ENCODE measurements at regions of chr18 and their contacts with region 1.

Region 1: GRCh38 chr18:11943551-11943950 is 35.4 kb upstream of the MPPE1 start:
- DNase-seq: no peak
- ATAC-seq: no peak
- H3K4me3 ChIP-seq: no peak overlapping the region
- H3K27ac ChIP-seq: no peak overlapping the region
- H3K4me1 ChIP-seq: peaks cover 10 to 18% (median 15%) of the 10 kb centered on the region in 3 donors
- H3K27me3 ChIP-seq: no peaks in the 10 kb centered on the region
- CTCF ChIP-seq: no peak

Region 2: DNA sequence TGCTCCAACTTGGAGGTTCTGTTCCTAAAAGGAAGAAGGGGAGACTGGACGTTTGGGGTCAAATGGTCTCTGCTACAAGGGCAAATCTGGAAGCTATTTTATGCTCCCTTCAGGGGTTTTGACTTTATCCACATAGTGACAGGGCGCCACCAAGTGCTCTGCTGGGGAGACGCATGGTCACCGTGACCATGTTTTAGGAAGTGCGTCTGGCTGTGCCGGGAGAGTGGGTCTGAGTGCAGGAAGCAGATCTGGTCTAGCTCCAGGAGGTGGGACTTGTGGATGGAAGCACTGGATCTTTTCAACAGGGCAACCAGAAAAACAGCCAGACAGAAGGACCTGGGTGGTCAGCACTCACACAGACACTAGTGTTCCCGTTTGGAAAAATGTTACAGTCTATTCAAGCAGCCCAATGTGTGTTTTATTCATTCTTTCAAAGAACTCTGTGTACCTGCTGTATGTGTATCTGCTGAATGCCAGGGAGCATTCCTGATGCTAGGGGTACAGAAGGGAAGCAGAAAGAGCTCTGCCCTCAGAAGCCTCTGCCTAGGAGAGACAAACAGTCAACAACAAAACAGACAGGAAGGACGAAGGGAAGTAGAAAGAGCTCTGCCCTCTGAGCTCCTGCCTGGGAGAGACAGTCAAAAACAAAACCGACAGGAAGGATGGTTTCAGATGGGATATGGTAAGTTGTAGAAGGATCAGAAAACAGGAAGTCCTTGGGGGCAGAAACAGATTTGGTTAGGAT is 52.1 kb after region 1 on chr18:
- intact Hi-C with region 1: loop called in 2 of 3 experiments (anchors 5 kb)
- DNase-seq: peak; percentile 75 to 81 (median 80)
- ATAC-seq: peak; percentile 71 to 87 (median 82)
- H3K4me3 ChIP-seq: peak overlapping the region in 1 of 4 donors; percentile 5
- H3K27ac ChIP-seq: peak overlapping the region; percentile 66 to 86 (median 72)
- H3K4me1 ChIP-seq: peaks cover 71 to 81% (median 79%) of the 10 kb centered on the region in 3 donors
- H3K27me3 ChIP-seq: no peaks in the 10 kb centered on the region
- CTCF ChIP-seq: peak; percentile 12 to 65 (median 55)

Region 3: GRCh38 chr18:12005538-12006487 is 62.3 kb after region 1 on chr18:
- intact Hi-C with region 1: no loop called
- DNase-seq: peak in 1 of 6 donors; percentile 53
- ATAC-seq: peak; percentile 6 to 27 (median 12)
- H3K4me3 ChIP-seq: no peak overlapping the region
- H3K27ac ChIP-seq: peak overlapping the region; percentile 12 to 92 (median 52)
- H3K4me1 ChIP-seq: peaks cover 54 to 74% (median 73%) of the 10 kb centered on the region in 3 donors
- H3K27me3 ChIP-seq: no peaks in the 10 kb centered on the region
- CTCF ChIP-seq: no peak

Region 4: DNA sequence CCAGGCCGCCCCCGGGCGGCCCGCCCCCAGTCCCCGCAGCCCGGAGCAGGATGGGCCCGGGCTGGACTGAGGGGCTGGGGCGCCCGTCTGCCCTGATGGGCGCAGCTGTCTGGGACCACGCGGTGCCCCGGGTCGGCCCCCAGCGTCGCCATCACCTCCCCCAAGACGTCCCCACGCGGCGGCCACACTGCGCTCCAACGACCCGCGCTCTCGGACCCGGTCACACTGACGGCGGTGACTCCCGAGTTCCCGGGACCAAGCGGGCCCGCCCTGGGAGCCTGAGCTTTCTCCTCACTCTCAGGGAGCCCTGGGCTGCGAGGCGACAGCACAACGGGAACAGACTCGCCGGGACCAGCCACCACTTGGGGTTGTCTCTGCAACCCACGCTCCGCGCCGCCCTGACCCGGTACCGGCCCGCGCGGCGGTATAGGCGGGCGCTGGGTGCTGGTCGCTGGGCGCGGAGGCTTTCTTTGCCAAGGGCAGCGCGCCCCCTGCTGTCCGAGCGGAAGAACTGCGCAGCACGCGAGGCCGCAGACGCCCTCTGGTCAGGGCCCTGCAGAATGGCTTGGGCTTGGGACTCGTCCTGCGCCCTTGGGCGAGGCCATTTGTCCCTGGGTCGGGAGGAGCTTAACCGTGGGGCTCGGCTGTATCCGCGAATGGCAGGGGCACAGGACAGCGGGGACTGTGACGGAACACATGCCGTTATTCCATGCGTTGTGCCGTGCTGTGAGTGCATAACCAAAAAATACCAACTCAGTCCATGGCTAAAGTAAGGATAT is 95.3 kb after region 1 on chr18:
- intact Hi-C with region 1: loop called in 2 of 3 experiments (anchors 5 kb)
- DNase-seq: peak; percentile 74 to 94 (median 88)
- ATAC-seq: peak; percentile 71 to 90 (median 85)
- H3K4me3 ChIP-seq: peak overlapping the region; percentile 14 to 47 (median 40)
- H3K27ac ChIP-seq: peak overlapping the region in 2 of 4 donors; percentile 40 to 66
- H3K4me1 ChIP-seq: peaks cover 14 to 30% (median 24%) of the 10 kb centered on the region in 3 donors
- H3K27me3 ChIP-seq: no peaks in the 10 kb centered on the region
- CTCF ChIP-seq: peak; percentile 98 to 99 (median 99)

Measured in pancreas (tissue), 10 donors.